ENCODE measurements at regions of chr20 and their contacts with region 1.

Region 1: GRCh38 chr20:34955232-34956040 is at the starts of genes GSS and MYH7B:
- DNase-seq: peak; percentile 98 to 99 (median 98)
- H3K4me3 ChIP-seq: peak within 1 kb of the TSS; percentile 56 to 89 (median 84)
- H3K27ac ChIP-seq: peak within 1 kb of the TSS; percentile 96 to 98
- H3K4me1 ChIP-seq: peaks cover 0 to 16% (median 15%) of the 10 kb centered on the region in 3 donors
- H3K27me3 ChIP-seq: no peaks in the 10 kb centered on the region
- CTCF ChIP-seq: peak; percentile 59
- total RNA-seq, gene GSS: 54.9 TPM
- total RNA-seq, gene MYH7B: 0.76 TPM

Region 2: GRCh38 chr20:34709044-34709830 is 246.2 kb before region 1 on chr20:
- intact Hi-C with region 1: no loop called
- DNase-seq: peak; percentile 89 to 94 (median 92)
- H3K4me3 ChIP-seq: peak overlapping the region; percentile 55 to 67 (median 59)
- H3K27ac ChIP-seq: peak overlapping the region; percentile 91 to 93
- H3K4me1 ChIP-seq: peaks cover 0 to 42% (median 32%) of the 10 kb centered on the region in 3 donors
- H3K27me3 ChIP-seq: no peaks in the 10 kb centered on the region
- CTCF ChIP-seq: no peak

Region 3: DNA sequence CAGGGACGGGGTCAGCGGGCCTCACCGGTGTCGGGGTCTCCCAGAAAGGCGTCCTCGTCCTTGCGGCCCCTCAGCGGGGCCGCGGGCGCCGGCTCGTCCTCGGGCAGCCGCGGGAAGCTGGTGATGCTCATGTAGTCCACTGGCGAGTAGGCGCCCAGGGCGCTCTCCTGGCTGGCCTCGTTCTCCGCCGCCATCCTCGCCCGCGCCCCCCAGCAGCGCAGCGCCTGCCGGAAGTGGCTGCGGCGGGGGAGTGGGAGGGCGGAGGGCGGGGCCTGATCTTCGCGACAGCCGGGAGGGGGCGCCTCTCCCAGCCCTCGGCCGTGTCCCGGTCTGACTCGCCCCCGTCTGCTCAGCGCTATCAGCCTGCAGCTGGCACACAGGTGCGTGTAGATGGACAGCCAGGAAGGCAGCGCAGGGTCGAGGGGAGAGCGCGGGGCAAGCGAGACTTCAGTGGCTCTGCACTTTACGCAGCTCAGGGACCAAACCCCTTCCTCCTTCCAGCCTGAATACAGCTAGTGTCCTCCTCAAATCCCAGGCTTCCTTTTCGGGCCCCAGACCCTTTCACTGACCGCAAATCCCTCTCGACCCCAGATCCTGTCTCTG is 82.7 kb before region 1 on chr20 and contains the start of gene GGT7:
- intact Hi-C with region 1: loop called (anchors 5 kb)
- DNase-seq: peak; percentile 84 to 94 (median 89)
- H3K4me3 ChIP-seq: peak within 1 kb of the TSS; percentile 74 to 78 (median 77)
- H3K27ac ChIP-seq: peak within 1 kb of the TSS; percentile 5 to 49
- H3K4me1 ChIP-seq: peaks cover 0 to 27% (median 13%) of the 10 kb centered on the region in 3 donors
- H3K27me3 ChIP-seq: no peaks in the 10 kb centered on the region
- CTCF ChIP-seq: peak; percentile 51
- total RNA-seq, gene GGT7: 27.0 TPM